Activated CD4-positive, alpha-beta T cell treated with anti-CD3 and anti-CD28 coated beads for 36 hours (primary cell): ENCODE measurements at regions of chr15 and their contacts with region 1.

Region 1: GRCh38 chr15:83108266-83109226 is 1.1 kb downstream of the TM6SF1 start:
- DNase-seq: peak; percentile 39
- ATAC-seq: peak; percentile 64
- H3K4me3 Mint-ChIP-seq: peak overlapping the region; percentile 69
- H3K27ac Mint-ChIP-seq: peak overlapping the region; percentile 59
- H3K4me1 Mint-ChIP-seq: peaks cover 8% of the 10 kb centered on the region
- H3K27me3 Mint-ChIP-seq: peaks cover 48% of the 10 kb centered on the region

Region 2: GRCh38 chr15:82995938-82996337 is 112.6 kb before region 1 on chr15:
- CTCF ChIA-PET with region 1: no interaction called
- POLR2A ChIA-PET with region 1: no interaction called
- intact Hi-C with region 1: no loop called
- DNase-seq: no peak
- ATAC-seq: no peak
- H3K4me3 Mint-ChIP-seq: no peak overlapping the region
- H3K27ac Mint-ChIP-seq: no peak overlapping the region
- H3K4me1 Mint-ChIP-seq: peaks cover 6% of the 10 kb centered on the region
- H3K27me3 Mint-ChIP-seq: no peaks in the 10 kb centered on the region

Region 3: DNA sequence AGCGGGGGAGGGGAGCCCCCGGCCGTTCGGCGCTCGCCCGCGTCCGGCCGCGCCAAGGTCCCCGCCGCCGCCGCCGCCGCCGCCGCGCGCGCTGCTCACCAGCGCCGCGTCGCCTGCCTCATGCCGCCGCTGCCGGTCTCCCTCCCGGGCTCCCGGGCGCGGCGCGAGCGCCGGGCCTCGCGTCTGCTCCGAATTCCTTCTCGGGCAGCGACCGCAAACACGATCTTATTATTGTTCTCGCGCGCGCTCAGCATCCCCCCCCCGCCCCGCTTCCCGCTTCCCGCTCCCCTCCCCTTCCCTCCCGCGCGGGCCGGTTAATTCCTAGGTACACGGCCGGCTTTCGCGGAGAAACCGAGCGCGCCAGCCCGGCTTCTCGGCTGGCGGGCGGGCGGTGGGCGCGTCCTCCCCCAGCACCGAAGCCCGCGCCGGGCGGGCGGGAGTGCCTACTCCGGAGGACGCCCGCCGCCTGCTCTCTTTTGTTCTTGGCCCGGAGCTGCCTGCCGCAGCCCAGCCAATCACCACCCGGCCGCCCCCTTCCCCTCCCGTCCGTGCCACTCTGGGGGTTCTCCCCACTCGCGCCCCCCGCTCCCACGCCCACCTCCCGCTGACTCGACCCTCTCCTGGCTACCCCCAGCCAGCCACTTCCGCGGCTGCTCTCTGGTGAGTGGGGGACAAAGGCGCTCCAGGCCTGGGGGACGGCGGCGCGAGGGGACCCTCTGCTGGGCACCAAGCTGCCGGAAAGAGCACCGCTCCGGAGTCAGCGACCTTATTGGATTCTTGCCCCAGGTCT is 99.3 kb after region 1 on chr15 and contains the start of gene HDGFL3:
- CTCF ChIA-PET with region 1: interaction called, 3 read pairs
- POLR2A ChIA-PET with region 1: no interaction called
- intact Hi-C with region 1: loop called in 1 of 2 experiments (anchors 5 kb)
- DNase-seq: peak; percentile 50
- ATAC-seq: peak; percentile 60
- H3K4me3 Mint-ChIP-seq: peak within 1 kb of the TSS; percentile 69
- H3K27ac Mint-ChIP-seq: no peak within 1 kb of the TSS
- H3K4me1 Mint-ChIP-seq: peaks cover 9% of the 10 kb centered on the region
- H3K27me3 Mint-ChIP-seq: peaks cover 25% of the 10 kb centered on the region
- total RNA-seq, gene HDGFL3: 5.0 to 7.4 TPM